ENCODE measurements at regions of chr19 and their contacts with region 1.

Region 1: DNA sequence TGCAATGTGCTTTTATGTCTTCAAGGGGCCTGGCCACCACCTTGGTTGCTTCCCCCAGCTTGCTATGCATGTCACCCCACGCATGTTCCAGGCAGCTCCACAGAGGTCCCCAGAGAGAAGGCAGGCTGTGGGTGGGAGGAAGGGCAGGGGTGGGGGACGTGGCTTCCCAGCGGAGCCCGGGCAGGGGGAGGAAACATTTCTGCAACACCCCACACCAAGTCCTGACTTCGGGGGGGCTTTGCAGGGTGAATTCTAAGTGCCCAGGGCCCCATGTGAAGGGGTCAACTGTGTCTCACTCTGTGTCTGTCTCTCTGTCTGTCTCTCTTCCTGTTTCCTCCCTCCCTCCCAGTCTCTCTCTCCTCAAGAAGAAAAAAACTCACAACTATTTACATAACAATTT is 39.6 kb downstream of the LTBP4 start:
- DNase-seq: no peak
- H3K4me3 Mint-ChIP-seq: no peak overlapping the region
- H3K27ac Mint-ChIP-seq: no peak overlapping the region
- H3K4me1 Mint-ChIP-seq: peaks cover 1% of the 10 kb centered on the region
- H3K27me3 Mint-ChIP-seq: peaks cover 1% of the 10 kb centered on the region

Region 2: GRCh38 chr19:40542202-40542859 is 98.4 kb before region 1 on chr19:
- CTCF ChIA-PET with region 1: interaction called, 11 read pairs
- POLR2A ChIA-PET with region 1: no interaction called
- DNase-seq: no peak
- H3K4me3 Mint-ChIP-seq: no peak overlapping the region
- H3K27ac Mint-ChIP-seq: no peak overlapping the region
- H3K4me1 Mint-ChIP-seq: no peaks in the 10 kb centered on the region
- H3K27me3 Mint-ChIP-seq: peaks cover 9% of the 10 kb centered on the region

Region 3: GRCh38 chr19:40623403-40624251 is 17.1 kb before region 1 on chr19:
- CTCF ChIA-PET with region 1: interaction called, 43 read pairs
- POLR2A ChIA-PET with region 1: interaction called, 3 read pairs
- DNase-seq: no peak
- H3K4me3 Mint-ChIP-seq: no peak overlapping the region
- H3K27ac Mint-ChIP-seq: no peak overlapping the region
- H3K4me1 Mint-ChIP-seq: peaks cover 12% of the 10 kb centered on the region
- H3K27me3 Mint-ChIP-seq: no peaks in the 10 kb centered on the region